Ascending aorta (tissue), 2 donors: ENCODE measurements at regions of chr10 and their contacts with region 1.

Region 1: DNA sequence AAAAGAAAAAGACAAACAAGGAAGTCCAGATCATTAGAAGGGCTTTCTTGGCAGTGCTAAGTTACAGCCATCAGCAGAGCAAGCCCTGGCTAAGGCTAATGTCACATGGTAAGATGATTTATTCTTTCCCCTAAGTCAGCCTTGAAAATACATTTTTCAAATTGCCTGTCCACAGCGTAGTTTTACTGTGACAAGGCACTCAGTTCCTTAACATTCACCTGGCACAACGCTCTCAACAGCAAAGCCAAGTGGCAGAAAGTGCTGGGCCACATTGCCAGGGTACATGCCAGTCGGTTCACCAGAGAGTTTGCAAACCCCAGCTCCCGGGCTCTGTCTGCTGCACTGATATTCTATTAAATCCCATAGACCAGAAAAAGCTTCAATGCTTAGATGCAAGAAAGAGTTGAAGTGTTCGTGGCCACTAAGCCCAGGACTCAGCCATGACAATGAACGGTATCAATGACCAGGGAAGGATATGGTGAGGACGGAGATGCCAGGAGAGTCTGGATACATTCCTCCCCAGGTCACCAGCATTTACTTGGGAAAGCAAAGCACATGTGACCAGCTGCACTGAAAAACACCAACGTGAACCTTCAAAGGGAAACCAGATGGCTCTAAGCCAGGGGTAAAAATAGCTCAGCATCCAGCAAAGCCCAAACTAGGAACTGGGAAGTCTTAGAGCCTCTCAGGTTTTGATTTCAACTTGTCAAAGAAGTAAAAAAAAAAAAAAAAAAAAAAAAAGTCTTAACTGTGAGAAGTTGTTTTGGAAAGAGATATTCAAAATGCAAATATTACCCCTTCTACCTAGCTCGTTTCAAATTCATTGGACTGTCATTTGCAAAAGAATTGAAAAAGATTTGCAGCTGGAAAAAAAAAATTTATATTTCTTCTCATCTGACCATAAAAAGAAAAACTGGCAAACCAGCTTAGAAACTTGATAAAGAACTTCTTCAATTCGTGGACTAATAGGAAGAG is 23.9 kb upstream of the MPP7 start:
- DNase-seq: peak; percentile 46 to 89
- H3K4me3 ChIP-seq: peak overlapping the region in 1 of 2 donors; percentile 25
- H3K27ac ChIP-seq: peak overlapping the region; percentile 73 to 86
- H3K4me1 ChIP-seq: peaks cover 0 to 17% of the 10 kb centered on the region in 2 donors
- H3K27me3 ChIP-seq: no peaks in the 10 kb centered on the region
- CTCF ChIP-seq: no peak

Region 2: GRCh38 chr10:28179006-28179742 is 147.6 kb before region 1 on chr10:
- intact Hi-C with region 1: no loop called
- DNase-seq: no peak
- H3K4me3 ChIP-seq: peak overlapping the region in 1 of 2 donors; percentile 53
- H3K27ac ChIP-seq: peak overlapping the region in 1 of 2 donors; percentile 60
- H3K4me1 ChIP-seq: peaks cover 5 to 12% of the 10 kb centered on the region in 2 donors
- H3K27me3 ChIP-seq: no peaks in the 10 kb centered on the region
- CTCF ChIP-seq: peak; percentile 48 to 72 (median 61)

Region 3: GRCh38 chr10:28250782-28251181 is 76.0 kb before region 1 on chr10:
- intact Hi-C with region 1: loop called (anchors 2 kb)
- DNase-seq: no peak
- H3K4me3 ChIP-seq: no peak overlapping the region
- H3K27ac ChIP-seq: peak overlapping the region; percentile 74 to 77
- H3K4me1 ChIP-seq: peaks cover 0 to 32% of the 10 kb centered on the region in 2 donors
- H3K27me3 ChIP-seq: no peaks in the 10 kb centered on the region
- CTCF ChIP-seq: peak; percentile 58 to 72 (median 62)

Region 4: GRCh38 chr10:28663576-28664313 is 336.9 kb after region 1 on chr10:
- intact Hi-C with region 1: no loop called
- DNase-seq: peak; percentile 21 to 87
- H3K4me3 ChIP-seq: no peak overlapping the region
- H3K27ac ChIP-seq: peak overlapping the region; percentile 47 to 62
- H3K4me1 ChIP-seq: peaks cover 0 to 5% of the 10 kb centered on the region in 2 donors
- H3K27me3 ChIP-seq: no peaks in the 10 kb centered on the region
- CTCF ChIP-seq: peak; percentile 88 to 98 (median 97)